ENCODE measurements at regions of chr9 and their contacts with region 1.

Region 1: DNA sequence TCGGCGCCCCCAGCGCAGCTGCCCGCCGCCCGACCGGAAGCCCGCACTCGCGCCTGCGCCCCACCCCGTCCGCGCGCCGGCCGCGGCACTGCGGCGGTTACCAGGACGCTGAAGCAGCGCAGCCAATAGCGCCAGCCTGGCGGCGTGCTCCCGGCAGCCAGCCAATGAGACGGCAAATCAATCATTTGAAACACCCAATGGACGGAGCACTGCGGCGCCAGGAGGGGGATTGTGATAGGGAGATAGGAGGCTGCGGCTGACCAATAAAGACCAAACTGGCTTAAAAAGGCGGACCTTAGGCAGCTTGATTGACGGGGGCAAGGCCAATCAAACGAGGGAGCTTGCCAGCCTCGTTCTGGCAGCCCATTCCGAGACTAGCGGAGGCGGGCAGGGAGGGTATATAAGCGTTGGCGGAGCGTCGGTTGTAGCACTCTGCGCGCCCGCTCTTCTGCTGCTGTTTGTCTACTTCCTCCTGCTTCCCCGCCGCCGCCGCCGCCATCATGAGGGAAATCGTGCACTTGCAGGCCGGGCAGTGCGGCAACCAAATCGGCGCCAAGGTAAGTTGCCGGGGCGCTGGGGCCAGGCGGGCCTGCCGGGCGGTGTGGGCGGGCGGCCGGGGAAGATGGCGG is at the start of gene TUBB4B:
- DNase-seq: peak; percentile 100
- ATAC-seq: peak; percentile 75
- H3K4me3 ChIP-seq: peak within 1 kb of the TSS; percentile 85 to 96
- H3K27ac ChIP-seq: peak within 1 kb of the TSS; percentile 100
- H3K4me1 ChIP-seq: peaks cover 31 to 61% of the 10 kb centered on the region in 2 experiments
- H3K27me3 ChIP-seq: no peaks in the 10 kb centered on the region
- CTCF ChIP-seq: no peak
- POLR2A ChIP-seq: peak; percentile 98
- RAD21 ChIP-seq: no peak
- total RNA-seq, gene TUBB4B: 502 TPM

Region 2: DNA sequence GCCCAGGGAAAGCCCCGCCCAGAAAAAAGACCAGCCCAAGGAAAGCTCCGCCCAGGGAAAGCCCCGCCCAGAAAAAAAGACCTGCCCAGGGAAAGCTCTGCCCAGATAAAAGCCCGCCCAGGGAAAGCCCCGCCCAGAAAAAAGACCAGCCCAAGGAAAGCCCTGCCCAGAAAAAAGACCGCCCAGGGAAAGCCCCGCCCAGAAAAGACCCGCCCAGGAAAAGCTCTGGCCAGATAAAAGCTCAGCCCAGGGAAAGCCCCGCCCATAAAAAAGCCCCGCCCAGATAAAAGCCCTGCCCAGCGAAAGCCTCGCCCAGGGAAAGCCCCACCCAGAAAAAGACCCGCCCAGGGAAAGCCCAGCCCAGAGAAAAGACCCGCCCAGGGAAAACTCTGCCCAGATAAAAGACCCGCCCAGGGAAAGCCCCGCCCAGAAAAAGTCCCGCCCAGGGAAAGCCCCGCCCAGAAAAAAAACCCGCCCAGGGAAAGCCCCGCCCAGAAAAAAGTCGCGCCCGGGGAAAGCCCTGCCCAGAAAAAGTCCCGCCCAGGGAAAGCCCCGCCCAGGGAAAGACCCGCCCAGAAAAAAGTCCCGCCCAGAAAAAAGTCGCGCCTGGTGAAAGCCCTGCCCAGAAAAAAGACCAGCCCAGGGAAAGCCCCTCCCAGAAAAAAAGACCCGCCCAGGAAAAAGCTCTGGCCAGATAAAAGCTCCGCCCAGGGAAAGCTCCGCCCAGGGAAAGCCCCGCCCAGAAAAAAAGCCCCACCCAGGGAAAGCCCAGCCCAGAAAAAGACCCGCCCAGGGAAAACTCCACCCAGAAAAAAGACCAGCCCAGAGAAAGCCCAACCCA is 90.1 kb before region 1 on chr9:
- CTCF ChIA-PET with region 1: interaction called, 13 read pairs
- POLR2A ChIA-PET with region 1: interaction called, 19 read pairs
- RAD21 ChIA-PET with region 1: no interaction called
- intact Hi-C with region 1: no loop called
- DNase-seq: peak; percentile 79
- ATAC-seq: peak; percentile 75
- H3K4me3 ChIP-seq: no peak overlapping the region
- H3K27ac ChIP-seq: peak overlapping the region; percentile 47; the same call in 1 of the 2 replicates
- H3K4me1 ChIP-seq: peaks cover 12 to 22% of the 10 kb centered on the region in 2 experiments
- H3K27me3 ChIP-seq: no peaks in the 10 kb centered on the region
- CTCF ChIP-seq: no peak
- POLR2A ChIP-seq: no peak
- RAD21 ChIP-seq: no peak

Region 3: DNA sequence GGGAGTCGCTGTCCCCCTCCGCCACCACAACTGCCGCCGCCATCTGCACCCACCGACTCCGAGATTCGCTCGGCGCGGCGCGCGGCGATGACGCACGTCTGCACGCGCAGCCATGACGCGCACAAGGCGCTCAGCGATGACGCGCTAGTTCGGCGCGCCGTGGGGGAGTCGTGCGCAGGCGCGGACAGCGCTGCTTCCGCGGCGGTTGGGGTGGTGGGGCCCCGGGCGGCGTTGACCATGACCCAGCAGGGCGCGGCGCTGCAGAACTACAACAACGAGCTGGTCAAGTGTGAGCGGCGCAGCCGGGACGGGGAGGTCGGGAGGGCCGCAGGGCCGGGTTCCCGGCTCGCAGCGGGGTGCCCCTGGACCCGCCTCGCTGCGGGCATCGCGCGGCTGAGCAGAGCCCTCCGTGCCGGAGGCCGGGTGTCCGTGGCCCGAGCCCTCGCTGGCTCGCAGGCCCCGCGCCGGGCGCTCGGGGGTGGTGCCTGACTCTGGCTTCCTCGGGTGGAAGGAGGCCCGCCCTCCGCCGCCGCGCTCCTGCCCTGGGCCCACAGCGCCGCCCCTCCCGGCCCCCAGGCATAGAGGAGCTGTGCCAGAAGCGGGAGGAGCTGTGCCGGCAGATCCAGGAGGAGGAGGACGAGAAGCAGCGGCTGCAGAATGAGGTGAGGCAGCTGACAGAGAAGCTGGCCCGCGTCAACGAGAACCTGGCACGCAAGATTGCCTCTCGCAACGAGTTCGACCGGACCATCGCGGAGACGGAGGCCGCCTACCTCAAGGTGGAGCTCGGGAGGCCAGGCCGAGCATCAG is 52.3 kb before region 1 on chr9 and contains the starts of genes ANAPC2 and SSNA1:
- CTCF ChIA-PET with region 1: interaction called, 13 read pairs
- POLR2A ChIA-PET with region 1: interaction called, 7 read pairs
- RAD21 ChIA-PET with region 1: interaction called in 1 of 2 experiments, 3 read pairs
- intact Hi-C with region 1: no loop called
- DNase-seq: peak; percentile 89
- ATAC-seq: peak; percentile 84
- H3K4me3 ChIP-seq: peak within 1 kb of the TSS; percentile 98 to 100
- H3K27ac ChIP-seq: peak within 1 kb of the TSS; percentile 99
- H3K4me1 ChIP-seq: peaks cover 16 to 33% of the 10 kb centered on the region in 2 experiments
- H3K27me3 ChIP-seq: no peaks in the 10 kb centered on the region
- CTCF ChIP-seq: peak in 2 of 3 experiments; percentile 32 to 38; a peak in 3 of 6 replicates
- POLR2A ChIP-seq: peak; percentile 90
- RAD21 ChIP-seq: no peak
- total RNA-seq, gene ANAPC2: 75.5 TPM
- total RNA-seq, gene SSNA1: 84.7 TPM

Region 4: GRCh38 chr9:137223078-137223970 is 17.7 kb before region 1 on chr9:
- CTCF ChIA-PET with region 1: interaction called, 43 read pairs
- POLR2A ChIA-PET with region 1: interaction called, 19 read pairs
- RAD21 ChIA-PET with region 1: interaction called in 1 of 2 experiments, 4 read pairs
- intact Hi-C with region 1: no loop called
- DNase-seq: peak; percentile 97
- ATAC-seq: peak; percentile 69
- H3K4me3 ChIP-seq: peak overlapping the region; percentile 82 to 99
- H3K27ac ChIP-seq: peak overlapping the region; percentile 98
- H3K4me1 ChIP-seq: peaks cover 48 to 79% of the 10 kb centered on the region in 2 experiments
- H3K27me3 ChIP-seq: no peaks in the 10 kb centered on the region
- CTCF ChIP-seq: no peak
- POLR2A ChIP-seq: peak; percentile 58
- RAD21 ChIP-seq: no peak

Region 5: DNA sequence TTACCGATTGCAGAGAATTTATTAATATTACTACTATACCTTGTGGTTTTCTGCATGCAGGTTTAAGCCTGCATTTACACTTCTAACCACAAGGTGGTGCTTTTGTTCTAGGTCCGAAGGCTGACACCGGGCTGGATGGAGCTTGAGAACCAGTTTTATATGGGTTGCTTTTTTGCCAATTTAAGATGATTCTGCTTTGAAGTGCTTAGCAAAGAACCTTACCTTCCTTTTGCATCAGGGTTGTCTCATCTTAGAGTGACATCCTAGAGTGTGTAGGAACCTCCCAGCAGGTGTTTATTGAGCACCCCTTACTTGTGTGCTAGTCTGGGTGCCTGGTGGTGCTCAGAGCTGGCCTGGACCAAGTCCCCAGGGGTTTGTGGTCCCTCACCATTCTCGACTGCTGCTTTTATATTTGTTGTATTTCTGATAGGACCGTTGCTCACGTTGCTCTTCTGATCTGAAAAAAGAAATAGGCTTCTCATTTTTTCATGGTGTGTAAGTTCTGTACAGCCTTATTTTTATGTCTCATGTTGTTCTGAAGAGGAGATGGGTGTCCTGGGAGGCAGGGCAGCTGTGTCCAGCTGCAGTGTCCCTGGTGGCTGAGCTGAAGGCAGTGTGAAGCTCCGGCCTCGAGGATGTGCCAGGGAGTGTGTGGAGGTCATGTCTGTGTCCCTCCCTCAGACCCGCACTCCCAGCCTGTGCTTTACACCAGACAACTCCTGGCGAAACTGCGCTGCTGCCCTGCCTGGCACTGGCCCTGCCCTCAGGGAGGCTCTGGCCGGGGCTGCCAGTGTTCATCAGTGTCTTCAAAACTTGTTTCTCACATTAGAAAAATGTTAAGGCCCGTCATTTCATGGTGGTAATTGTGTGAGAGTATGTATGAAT is 432.2 kb after region 1 on chr9:
- CTCF ChIA-PET with region 1: no interaction called
- POLR2A ChIA-PET with region 1: no interaction called
- RAD21 ChIA-PET with region 1: no interaction called
- intact Hi-C with region 1: no loop called
- DNase-seq: peak; percentile 36
- ATAC-seq: peak; percentile 81
- H3K4me3 ChIP-seq: no peak overlapping the region
- H3K27ac ChIP-seq: no peak overlapping the region
- H3K4me1 ChIP-seq: no peaks in the 10 kb centered on the region
- H3K27me3 ChIP-seq: no peaks in the 10 kb centered on the region
- CTCF ChIP-seq: peak; percentile 70 to 85 (median 83)
- POLR2A ChIP-seq: no peak
- RAD21 ChIP-seq: peak; percentile 80

Region 6: DNA sequence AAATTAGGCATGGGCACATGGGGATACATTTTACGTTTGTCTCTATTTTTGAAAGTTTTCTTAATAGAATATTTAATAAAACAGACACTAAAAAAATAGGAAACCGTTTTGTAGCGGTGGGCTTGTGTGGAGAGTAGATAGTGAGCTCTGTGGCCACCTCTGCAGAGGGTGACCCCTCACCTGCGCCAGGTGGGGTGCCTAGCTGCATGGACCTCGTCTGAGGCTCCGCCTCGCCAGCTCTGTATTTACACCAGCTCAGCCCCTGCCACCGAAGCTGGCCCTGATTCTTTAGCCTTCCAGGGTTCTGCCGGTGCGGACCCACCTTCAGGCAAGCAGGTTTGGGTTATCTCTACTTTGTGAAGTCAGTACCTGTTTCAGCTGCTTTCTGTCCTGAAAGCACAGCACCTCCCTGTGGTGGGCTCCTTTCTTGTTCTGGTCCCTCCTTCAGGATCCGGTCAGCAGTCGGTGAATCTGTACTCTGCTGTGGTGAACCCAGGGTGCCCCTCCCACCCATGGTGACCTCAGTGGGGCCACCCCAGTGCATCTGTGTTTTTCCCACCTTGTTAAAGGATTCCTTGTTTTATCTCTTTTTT is 531.4 kb after region 1 on chr9:
- CTCF ChIA-PET with region 1: no interaction called
- POLR2A ChIA-PET with region 1: no interaction called
- RAD21 ChIA-PET with region 1: no interaction called
- intact Hi-C with region 1: no loop called
- DNase-seq: no peak
- ATAC-seq: peak; percentile 69
- H3K4me3 ChIP-seq: no peak overlapping the region
- H3K27ac ChIP-seq: no peak overlapping the region
- H3K4me1 ChIP-seq: no peaks in the 10 kb centered on the region
- H3K27me3 ChIP-seq: no peaks in the 10 kb centered on the region
- CTCF ChIP-seq: peak; percentile 29 to 56 (median 40); a peak in 4 of 6 replicates
- POLR2A ChIP-seq: no peak
- RAD21 ChIP-seq: peak; percentile 49